PC-9 (cell line): ENCODE measurements at regions of chr2 and their contacts with region 1.

Region 1: GRCh38 chr2:212421556-212422334 is 116.9 kb downstream of the ERBB4 start:
- DNase-seq: no peak
- H3K4me3 ChIP-seq: no peak overlapping the region
- H3K27ac ChIP-seq: no peak overlapping the region
- H3K4me1 ChIP-seq: no peaks in the 10 kb centered on the region
- H3K27me3 ChIP-seq: no peaks in the 10 kb centered on the region
- CTCF ChIP-seq: no peak

Region 2: GRCh38 chr2:212477571-212477970 is 55.8 kb after region 1 on chr2:
- CTCF ChIA-PET with region 1: no interaction called
- POLR2A ChIA-PET with region 1: no interaction called
- intact Hi-C with region 1: loop called (anchors 5 kb)
- DNase-seq: no peak
- H3K4me3 ChIP-seq: no peak overlapping the region
- H3K27ac ChIP-seq: no peak overlapping the region
- H3K4me1 ChIP-seq: no peaks in the 10 kb centered on the region
- H3K27me3 ChIP-seq: no peaks in the 10 kb centered on the region
- CTCF ChIP-seq: no peak